ENCODE measurements at regions of chr13 and their contacts with region 1.

Region 1: GRCh38 chr13:114281351-114282040 is at the start of gene UPF3A:
- DNase-seq: peak; percentile 93
- ATAC-seq: peak; percentile 95
- total RNA-seq, gene UPF3A: 19.3 TPM

Region 2: DNA sequence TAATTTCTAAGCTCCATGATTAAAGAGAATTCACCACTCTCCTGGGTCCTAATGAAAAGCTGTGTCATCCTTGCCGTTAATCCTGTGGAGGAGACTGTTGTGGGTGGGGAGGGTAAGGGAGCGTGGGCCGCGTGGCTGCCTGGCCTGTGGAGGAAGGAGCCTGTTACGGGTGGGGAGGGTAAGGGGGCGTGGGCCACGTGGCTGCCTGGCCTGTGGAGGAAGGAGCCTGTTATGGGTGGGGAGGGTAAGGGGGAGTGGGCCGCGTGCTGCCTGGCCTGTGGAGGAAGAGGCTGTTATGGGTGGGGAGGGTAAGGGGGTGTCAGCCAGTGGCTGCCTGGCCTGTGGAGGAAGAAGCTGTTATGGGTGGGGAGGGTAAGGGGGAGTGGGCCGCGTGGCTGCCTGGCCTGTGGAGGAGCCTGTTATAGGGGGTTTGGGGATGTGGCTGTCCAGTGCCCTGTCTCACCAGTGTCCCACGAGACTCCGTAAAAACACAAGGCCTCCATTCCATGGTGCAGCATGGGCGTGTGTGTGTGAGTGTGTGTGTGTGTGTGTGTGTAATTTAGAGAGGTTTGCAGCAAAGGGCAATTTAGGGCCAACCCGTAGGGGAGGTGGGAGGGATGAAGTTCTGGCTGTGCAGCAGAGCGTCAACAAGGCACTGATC is 775.3 kb before region 1 on chr13:
- intact Hi-C with region 1: no loop called
- DNase-seq: no peak
- ATAC-seq: peak; percentile 29

Region 3: DNA sequence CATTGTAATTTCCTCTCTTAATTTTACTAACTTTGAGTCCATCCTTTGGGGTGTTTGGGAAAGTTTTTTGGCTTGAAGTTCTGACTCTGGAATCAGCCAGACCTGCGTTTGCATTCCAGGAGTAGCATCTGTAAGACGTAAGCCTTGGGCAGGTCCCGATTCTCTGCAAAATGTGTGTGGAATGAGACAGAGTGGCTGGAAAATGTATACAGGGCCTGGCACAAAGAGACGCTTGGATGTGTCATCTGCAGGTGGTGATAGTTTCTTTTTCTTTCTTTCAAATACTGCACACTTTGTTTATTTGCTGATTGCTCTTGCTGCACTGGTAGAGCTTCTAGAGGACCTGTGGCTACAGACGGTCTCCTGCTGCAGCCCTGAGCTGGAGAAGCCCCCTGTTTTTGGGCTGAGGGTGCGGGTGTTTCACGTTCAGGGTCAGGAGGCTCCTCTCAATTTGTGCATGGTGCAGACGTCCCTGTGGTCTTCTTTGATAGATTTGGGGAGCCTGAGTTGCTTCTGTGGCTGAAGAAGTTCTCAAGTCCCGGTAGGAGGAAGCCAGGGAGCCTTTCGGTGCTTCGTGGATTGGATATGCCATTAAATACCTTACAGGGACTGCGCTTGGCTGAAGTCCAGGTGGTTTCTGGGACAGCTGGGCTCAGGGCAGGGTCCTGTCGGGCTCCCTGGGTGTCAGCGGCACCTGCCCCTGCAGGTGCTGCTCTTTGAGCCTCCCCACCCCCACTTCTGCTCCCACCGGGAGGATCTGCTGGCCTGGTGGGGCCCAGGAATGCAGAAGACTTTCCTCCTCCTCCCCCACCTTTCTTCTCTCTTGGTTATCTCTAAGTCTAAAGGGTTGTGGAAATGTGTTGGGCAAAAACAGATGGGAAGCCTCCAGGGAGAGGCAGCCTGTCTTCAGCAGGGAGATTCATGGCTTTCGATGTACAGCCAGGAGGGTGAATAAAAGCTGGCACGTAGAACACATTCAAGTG is 373.6 kb before region 1 on chr13:
- intact Hi-C with region 1: no loop called
- DNase-seq: no peak
- ATAC-seq: no peak

Region 4: GRCh38 chr13:114234645-114235421 is 46.7 kb before region 1 on chr13 and contains the start of gene CDC16:
- intact Hi-C with region 1: loop called (anchors 2 kb)
- DNase-seq: peak; percentile 95
- ATAC-seq: peak; percentile 99
- total RNA-seq, gene CDC16: 36.7 TPM

Region 5: DNA sequence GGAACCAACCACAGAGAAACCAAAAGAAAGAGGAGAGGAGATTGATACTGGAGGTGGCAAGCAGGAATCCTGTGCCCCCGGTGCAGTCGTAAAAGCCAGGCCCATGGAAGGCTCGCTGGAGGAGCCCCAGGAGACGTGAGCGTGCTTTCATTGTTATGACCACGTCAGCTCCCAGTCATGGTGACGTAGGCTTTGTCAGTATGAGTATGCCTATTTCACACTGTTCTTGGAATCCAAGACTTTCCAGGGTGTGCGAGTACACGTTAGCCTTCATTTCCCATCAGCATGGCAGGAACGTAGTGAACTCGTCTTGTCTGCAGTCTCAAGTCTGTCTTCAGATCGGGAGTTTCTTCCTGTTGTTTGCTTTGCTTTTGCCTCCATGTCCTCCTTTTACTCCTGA is 17.4 kb after region 1 on chr13:
- intact Hi-C with region 1: no loop called
- DNase-seq: no peak
- ATAC-seq: no peak

Region 6: GRCh38 chr13:114314074-114314912 is 32.8 kb after region 1 on chr13 and contains the start of gene CHAMP1:
- intact Hi-C with region 1: loop called (anchors 2 kb)
- DNase-seq: peak; percentile 99
- ATAC-seq: peak; percentile 96
- total RNA-seq, gene CHAMP1: 7.7 TPM

Measured in Right ventricle myocardium inferior (tissue), 1 donor.